ENCODE measurements at regions of chr20 and their contacts with region 1.

Region 1: GRCh38 chr20:15656124-15656523 is 917.1 kb downstream of the KIF16B start:
- DNase-seq: peak; percentile 79
- ATAC-seq: peak; percentile 95
- H3K4me3 ChIP-seq: no peak overlapping the region
- H3K27ac ChIP-seq: no peak overlapping the region
- H3K4me1 ChIP-seq: peaks cover 22% of the 10 kb centered on the region
- H3K27me3 ChIP-seq: no peaks in the 10 kb centered on the region
- CTCF ChIP-seq: no peak

Region 2: DNA sequence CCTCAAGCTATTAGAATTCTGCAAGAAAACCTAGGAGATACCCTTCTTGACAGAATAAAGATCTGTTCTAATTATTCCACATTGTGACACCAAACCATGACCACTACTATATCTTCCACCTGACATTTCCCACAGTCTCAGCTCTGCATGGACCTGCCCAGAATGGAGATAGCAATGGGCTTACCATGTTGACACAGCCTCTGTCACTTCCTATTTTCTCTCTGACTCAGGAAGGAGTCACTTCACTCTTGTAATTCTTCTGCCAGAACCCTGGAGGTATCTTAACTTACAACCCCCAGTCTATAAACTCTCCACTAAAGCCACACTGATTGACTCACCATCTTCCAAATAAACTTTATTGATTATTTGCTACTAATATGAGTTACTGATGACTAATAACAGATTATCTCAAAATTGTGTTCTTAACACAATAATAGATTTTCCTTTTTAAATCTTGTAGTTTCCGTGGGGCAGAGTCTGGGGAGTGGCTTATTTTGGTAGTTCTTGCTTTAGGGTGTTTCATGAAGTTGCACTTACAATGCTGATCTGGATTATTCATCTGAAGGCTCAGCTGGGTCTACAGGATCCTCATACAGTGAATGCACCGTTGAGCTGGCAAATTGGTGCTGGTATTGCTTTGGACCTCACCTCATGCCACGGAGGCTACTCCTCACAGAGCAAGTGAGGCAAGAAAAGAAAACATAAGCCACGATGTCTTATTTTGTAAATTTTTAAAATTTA is 47.2 kb after region 1 on chr20:
- CTCF ChIA-PET with region 1: no interaction called
- POLR2A ChIA-PET with region 1: no interaction called
- intact Hi-C with region 1: loop called (anchors 5 kb)
- DNase-seq: peak; percentile 99
- ATAC-seq: peak; percentile 98
- H3K4me3 ChIP-seq: no peak overlapping the region
- H3K27ac ChIP-seq: peak overlapping the region; percentile 88
- H3K4me1 ChIP-seq: peaks cover 39% of the 10 kb centered on the region
- H3K27me3 ChIP-seq: no peaks in the 10 kb centered on the region
- CTCF ChIP-seq: no peak

Region 3: DNA sequence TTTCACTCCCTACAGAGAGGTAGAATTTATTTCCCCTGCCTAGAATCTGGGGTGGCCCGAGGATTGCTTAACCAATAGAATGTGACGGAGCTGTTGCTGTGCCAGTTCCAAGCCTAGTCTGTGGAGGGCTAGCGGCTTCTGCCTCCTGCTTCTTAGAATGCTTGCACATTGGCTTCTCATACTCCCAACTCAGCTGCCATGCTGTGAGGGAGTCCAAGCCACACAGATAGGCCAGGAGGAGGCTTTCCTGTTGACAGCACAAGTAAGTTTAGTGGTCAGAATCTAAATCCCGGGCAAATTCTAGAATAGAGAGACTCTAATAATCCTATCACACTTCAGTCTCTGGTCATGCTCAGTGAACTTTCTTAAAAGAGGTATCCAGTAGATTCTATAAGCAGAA is 1016.2 kb after region 1 on chr20:
- CTCF ChIA-PET with region 1: interaction called, 14 read pairs
- POLR2A ChIA-PET with region 1: no interaction called
- intact Hi-C with region 1: no loop called
- DNase-seq: no peak
- ATAC-seq: no peak
- H3K4me3 ChIP-seq: no peak overlapping the region
- H3K27ac ChIP-seq: no peak overlapping the region
- H3K4me1 ChIP-seq: no peaks in the 10 kb centered on the region
- H3K27me3 ChIP-seq: peaks cover 4% of the 10 kb centered on the region; the same call in 1 of the 2 replicates
- CTCF ChIP-seq: no peak

Measured in PC-3 (cell line).